ENCODE measurements at regions of chr9 and their contacts with region 1.

Region 1: GRCh38 chr9:131590908-131591844 is 45.9 kb downstream of the PRRT1B start:
- DNase-seq: peak; percentile 78
- ATAC-seq: peak; percentile 100
- H3K4me3 ChIP-seq: no peak overlapping the region
- H3K27ac ChIP-seq: no peak overlapping the region
- H3K4me1 ChIP-seq: no peaks in the 10 kb centered on the region
- H3K27me3 ChIP-seq: no peaks in the 10 kb centered on the region
- CTCF ChIP-seq: peak; percentile 85

Region 2: GRCh38 chr9:131635285-131635684 is 44.1 kb after region 1 on chr9:
- CTCF ChIA-PET with region 1: no interaction called
- POLR2A ChIA-PET with region 1: no interaction called
- intact Hi-C with region 1: no loop called
- DNase-seq: peak; percentile 90
- ATAC-seq: peak; percentile 100
- H3K4me3 ChIP-seq: no peak overlapping the region
- H3K27ac ChIP-seq: peak overlapping the region; percentile 73
- H3K4me1 ChIP-seq: peaks cover 12% of the 10 kb centered on the region
- H3K27me3 ChIP-seq: no peaks in the 10 kb centered on the region
- CTCF ChIP-seq: no peak

Region 3: GRCh38 chr9:131747356-131747755 is 156.2 kb after region 1 on chr9:
- CTCF ChIA-PET with region 1: no interaction called
- POLR2A ChIA-PET with region 1: no interaction called
- intact Hi-C with region 1: loop called (anchors 2 kb)
- DNase-seq: peak; percentile 73
- ATAC-seq: peak; percentile 69
- H3K4me3 ChIP-seq: no peak overlapping the region
- H3K27ac ChIP-seq: no peak overlapping the region
- H3K4me1 ChIP-seq: no peaks in the 10 kb centered on the region
- H3K27me3 ChIP-seq: no peaks in the 10 kb centered on the region
- CTCF ChIP-seq: peak; percentile 70

Measured in PC-3 (cell line).